Activated naive CD4-positive, alpha-beta T cell treated with anti-CD3 and anti-CD28 coated beads for 36 hours (primary cell): ENCODE measurements at regions of chr6 and their contacts with region 1.

Region 1: DNA sequence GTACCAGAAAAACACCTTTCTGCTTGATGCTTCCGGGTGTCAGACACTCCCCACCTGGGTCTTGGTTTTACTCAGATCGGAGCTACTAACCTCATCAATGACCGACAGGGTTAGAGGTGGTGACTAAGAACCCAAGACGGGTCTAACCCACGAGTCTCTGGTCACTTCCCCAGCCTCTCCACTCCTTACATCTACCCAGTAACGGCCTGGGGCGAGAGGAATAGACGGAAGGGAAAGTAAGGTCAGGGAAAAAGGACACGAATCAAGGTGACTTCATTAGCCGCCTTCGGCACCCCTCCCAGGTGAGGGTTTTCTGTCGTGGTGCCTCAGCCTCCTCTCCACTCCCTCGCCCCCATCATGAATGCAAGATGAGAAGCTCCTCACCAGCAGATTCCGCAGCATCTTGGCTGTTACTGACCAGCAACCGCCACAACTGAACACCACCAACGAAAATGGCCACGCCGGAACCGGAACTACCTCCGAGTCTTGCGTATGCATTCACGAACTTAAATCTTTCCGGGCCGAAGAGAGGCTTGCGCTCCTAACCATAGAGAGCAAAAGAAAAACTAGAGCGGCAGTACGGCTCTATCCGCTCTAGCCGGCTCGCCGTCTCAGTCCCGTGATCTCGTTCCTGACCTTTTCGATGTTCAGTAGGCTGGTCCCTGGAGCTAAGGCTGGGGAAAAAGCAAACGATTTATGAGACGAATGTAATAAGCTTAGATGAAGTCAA is at the start of gene COX7A2:
- DNase-seq: peak; percentile 92
- H3K4me3 Mint-ChIP-seq: peak within 1 kb of the TSS; percentile 98
- H3K27ac Mint-ChIP-seq: peak within 1 kb of the TSS; percentile 100
- H3K4me1 Mint-ChIP-seq: peaks cover 32% of the 10 kb centered on the region
- H3K27me3 Mint-ChIP-seq: peaks cover 12% of the 10 kb centered on the region
- total RNA-seq, gene COX7A2: 577 to 592 TPM

Region 2: DNA sequence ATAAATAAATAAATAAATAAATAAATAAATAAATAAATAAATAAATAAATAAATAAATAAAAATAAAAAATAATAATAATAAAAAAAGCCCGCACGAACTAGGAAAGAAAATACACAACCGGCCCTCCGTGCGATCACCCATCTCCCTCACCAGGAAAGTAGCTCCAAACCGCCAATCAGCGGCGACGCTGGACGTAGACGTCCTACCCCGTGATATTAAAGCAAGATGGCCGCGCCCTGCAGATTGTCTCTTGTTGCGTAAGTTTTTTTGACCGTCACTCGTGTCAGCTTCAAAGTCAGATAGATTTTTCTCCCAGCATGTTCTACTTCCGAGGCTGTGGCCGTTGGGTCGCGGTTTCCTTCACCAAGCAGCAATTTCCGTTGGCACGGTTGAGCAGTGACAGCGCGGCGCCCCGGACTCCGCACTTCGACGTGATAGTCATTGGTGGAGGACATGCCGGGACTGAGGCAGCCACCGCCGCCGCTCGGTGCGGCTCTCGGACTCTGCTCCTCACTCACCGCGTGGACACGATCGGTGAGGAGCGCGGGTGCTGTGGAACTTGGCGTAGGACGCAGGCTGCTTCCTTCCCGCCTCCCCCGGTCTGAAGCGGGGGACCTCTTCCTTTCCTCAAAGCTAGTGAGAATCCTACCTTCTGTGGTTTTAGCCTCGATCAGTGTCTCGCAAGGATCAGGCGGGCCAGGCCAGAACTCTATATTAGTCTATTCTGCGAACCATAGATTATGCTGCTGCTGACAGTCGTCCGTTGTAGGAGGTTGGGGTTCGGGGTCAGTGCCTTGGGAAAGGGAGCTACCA is 1781.8 kb before region 1 on chr6 and contains the start of gene MTO1:
- CTCF ChIA-PET with region 1: no interaction called
- intact Hi-C with region 1: loop called (anchors 10 kb)
- DNase-seq: peak; percentile 92
- H3K4me3 Mint-ChIP-seq: peak within 1 kb of the TSS; percentile 94
- H3K27ac Mint-ChIP-seq: peak within 1 kb of the TSS; percentile 97
- H3K4me1 Mint-ChIP-seq: peaks cover 37% of the 10 kb centered on the region
- H3K27me3 Mint-ChIP-seq: no peaks in the 10 kb centered on the region
- total RNA-seq, gene MTO1: 38.7 to 47.1 TPM

Region 3: GRCh38 chr6:73580247-73581149 is 1663.0 kb before region 1 on chr6:
- CTCF ChIA-PET with region 1: no interaction called
- intact Hi-C with region 1: loop called (anchors 1 kb)
- DNase-seq: peak; percentile 90
- H3K4me3 Mint-ChIP-seq: peak overlapping the region; percentile 76
- H3K27ac Mint-ChIP-seq: peak overlapping the region; percentile 99
- H3K4me1 Mint-ChIP-seq: peaks cover 28% of the 10 kb centered on the region
- H3K27me3 Mint-ChIP-seq: no peaks in the 10 kb centered on the region

Region 4: GRCh38 chr6:75266716-75267291 is 23.3 kb after region 1 on chr6:
- CTCF ChIA-PET with region 1: interaction called, 3 read pairs
- intact Hi-C with region 1: loop called (anchors 1 kb)
- DNase-seq: no peak
- H3K4me3 Mint-ChIP-seq: no peak overlapping the region
- H3K27ac Mint-ChIP-seq: no peak overlapping the region
- H3K4me1 Mint-ChIP-seq: peaks cover 38% of the 10 kb centered on the region
- H3K27me3 Mint-ChIP-seq: no peaks in the 10 kb centered on the region

Region 5: GRCh38 chr6:75402296-75402695 is 158.8 kb after region 1 on chr6:
- CTCF ChIA-PET with region 1: no interaction called
- intact Hi-C with region 1: no loop called
- DNase-seq: no peak
- H3K4me3 Mint-ChIP-seq: no peak overlapping the region
- H3K27ac Mint-ChIP-seq: no peak overlapping the region
- H3K4me1 Mint-ChIP-seq: no peaks in the 10 kb centered on the region
- H3K27me3 Mint-ChIP-seq: peaks cover 3% of the 10 kb centered on the region

Region 6: DNA sequence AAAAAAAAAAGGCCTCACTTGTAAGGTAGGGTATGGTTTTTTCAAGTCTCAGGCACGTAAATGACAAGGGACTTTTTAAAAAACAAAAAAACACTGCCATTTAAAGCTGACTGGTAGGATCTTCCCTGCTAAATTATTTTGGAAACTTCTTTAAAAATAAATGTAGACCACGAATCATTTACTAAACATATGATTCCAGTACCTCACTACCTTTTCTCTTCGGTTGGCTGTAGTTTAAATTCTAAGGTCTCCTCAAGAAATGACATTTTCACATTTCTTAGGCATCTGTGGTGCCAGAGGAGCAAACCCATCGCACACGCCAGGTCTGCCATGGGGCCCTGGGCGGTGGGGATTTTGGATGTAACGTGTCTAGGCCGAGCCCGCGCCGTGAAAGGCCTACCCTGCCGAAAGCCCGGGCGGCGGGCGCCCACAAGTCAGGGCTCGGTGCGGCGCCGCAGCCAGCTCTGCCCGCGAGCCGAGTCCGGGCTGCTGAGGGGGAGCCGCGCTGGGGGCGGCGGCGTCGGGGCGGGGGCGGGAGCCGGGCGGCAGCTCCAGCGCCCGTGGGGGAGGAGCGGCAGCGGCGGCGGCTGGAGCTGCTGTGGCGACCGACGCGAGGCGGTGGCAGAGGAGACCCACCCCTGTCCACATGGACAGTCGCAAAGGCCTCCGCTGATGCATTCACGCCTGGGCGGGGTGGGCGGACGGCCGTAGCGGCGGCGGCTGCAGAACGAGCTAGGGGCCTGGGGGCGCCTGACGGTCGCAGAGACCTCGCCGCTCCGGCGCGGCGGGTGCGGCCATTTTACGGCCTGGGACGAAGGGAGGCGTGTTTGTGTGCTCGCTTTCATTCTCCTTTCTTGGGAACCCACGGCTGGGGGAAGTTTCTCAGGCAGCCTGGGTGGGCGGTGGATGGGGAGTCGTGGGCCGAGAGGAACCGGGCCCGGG is 358.1 kb after region 1 on chr6 and contains the start of gene SENP6:
- CTCF ChIA-PET with region 1: no interaction called
- intact Hi-C with region 1: loop called (anchors 1 kb)
- DNase-seq: peak; percentile 68
- H3K4me3 Mint-ChIP-seq: peak within 1 kb of the TSS; percentile 95
- H3K27ac Mint-ChIP-seq: peak within 1 kb of the TSS; percentile 99
- H3K4me1 Mint-ChIP-seq: peaks cover 55% of the 10 kb centered on the region
- H3K27me3 Mint-ChIP-seq: no peaks in the 10 kb centered on the region
- total RNA-seq, gene SENP6: 54.0 to 57.7 TPM